ENCODE measurements at regions of chr19 and their contacts with region 1.

Region 1: GRCh38 chr19:40305403-40305802 is 20.3 kb upstream of the AKT2 start:
- DNase-seq: peak; percentile 60
- H3K4me3 ChIP-seq: no peak overlapping the region
- CTCF ChIP-seq: peak; percentile 65

Region 2: DNA sequence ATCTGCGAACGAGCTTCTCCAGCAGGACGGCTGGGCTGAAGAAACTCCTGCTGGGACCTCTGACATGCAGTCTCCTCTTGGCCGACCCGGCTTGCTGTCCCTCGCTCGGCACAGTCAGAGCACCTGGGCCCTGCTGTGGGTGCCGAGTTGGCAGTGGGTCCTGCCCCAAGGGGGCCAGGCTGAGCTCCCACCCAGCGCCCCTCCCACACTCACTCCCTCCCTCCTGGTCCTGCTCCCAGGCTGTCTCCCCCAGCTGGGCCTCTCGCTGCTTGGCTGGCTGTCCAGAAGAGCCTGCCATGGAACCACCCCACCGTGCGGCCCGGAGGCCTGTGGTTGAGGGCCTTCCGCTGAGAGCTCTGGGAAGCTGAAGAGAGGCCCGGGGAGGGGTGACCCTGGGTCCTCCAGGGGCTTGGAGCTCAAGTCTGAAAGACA is 26.3 kb before region 1 on chr19:
- CTCF ChIA-PET with region 1: interaction called, 18 read pairs
- POLR2A ChIA-PET with region 1: no interaction called
- DNase-seq: no peak
- H3K4me3 ChIP-seq: no peak overlapping the region
- CTCF ChIP-seq: no peak

Region 3: GRCh38 chr19:40294560-40294959 is 10.8 kb before region 1 on chr19:
- CTCF ChIA-PET with region 1: interaction called, 19 read pairs
- POLR2A ChIA-PET with region 1: no interaction called
- DNase-seq: no peak
- H3K4me3 ChIP-seq: no peak overlapping the region
- CTCF ChIP-seq: no peak

Region 4: GRCh38 chr19:40331069-40331468 is 25.7 kb after region 1 on chr19:
- CTCF ChIA-PET with region 1: interaction called, 15 read pairs
- POLR2A ChIA-PET with region 1: no interaction called
- DNase-seq: no peak
- H3K4me3 ChIP-seq: no peak overlapping the region
- CTCF ChIP-seq: no peak

Region 5: GRCh38 chr19:40465557-40466150 is 160.3 kb after region 1 on chr19 and contains the start of gene BLVRB:
- CTCF ChIA-PET with region 1: interaction called, 26 read pairs
- POLR2A ChIA-PET with region 1: no interaction called
- DNase-seq: peak; percentile 93
- H3K4me3 ChIP-seq: peak within 1 kb of the TSS; percentile 81
- CTCF ChIP-seq: no peak

Region 6: DNA sequence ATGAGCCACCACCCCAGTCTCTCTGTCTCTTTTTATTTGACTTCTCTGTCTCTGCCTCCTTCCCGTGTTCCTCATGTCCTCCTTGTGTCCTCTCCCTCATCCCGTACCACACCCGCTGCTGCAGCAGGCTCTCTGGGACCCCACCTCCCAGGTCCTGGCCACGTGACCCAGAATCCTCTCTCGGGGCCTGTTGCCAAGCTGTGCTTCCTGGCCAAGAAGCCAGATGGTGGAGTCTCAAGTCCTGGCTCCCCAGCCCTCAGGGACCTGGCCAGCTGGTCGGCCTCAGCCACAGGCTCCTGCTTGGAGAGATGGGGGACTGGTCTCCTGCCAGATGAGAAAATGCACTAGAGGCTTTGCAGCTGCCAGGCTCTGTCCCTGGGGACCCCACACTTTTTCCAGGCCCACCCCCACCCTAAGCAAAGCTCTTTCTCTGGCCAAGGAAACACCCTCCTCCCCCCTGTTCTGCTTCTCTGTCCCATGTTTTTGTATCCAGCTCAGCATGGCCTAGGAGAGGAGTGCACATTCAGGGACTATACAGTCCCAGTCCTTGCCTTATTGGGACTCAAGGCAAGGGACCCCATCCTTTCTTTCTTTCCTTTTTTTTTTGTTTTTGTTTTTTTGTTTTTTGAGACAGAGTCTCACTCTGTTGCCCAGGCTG is 236.9 kb after region 1 on chr19:
- CTCF ChIA-PET with region 1: interaction called, 10 read pairs
- POLR2A ChIA-PET with region 1: no interaction called
- DNase-seq: no peak
- H3K4me3 ChIP-seq: no peak overlapping the region
- CTCF ChIP-seq: no peak

Region 7: GRCh38 chr19:40640744-40641143 is 335.3 kb after region 1 on chr19:
- CTCF ChIA-PET with region 1: interaction called, 38 read pairs
- POLR2A ChIA-PET with region 1: no interaction called
- DNase-seq: no peak
- H3K4me3 ChIP-seq: no peak overlapping the region
- CTCF ChIP-seq: no peak